ENCODE measurements at regions of chr2 and their contacts with region 1.

Region 1: GRCh38 chr2:205077159-205077558 is 531.9 kb downstream of the PARD3B start:
- DNase-seq: peak in 4 of 14 experiments; percentile 12 to 70 (median 60)
- ATAC-seq: peak; percentile 79
- H3K4me3 ChIP-seq: peak overlapping the region; percentile 17
- H3K4me3 Mint-ChIP-seq: peak overlapping the region; percentile 79
- H3K27ac ChIP-seq: peak overlapping the region; percentile 57 to 61
- H3K27ac Mint-ChIP-seq: peak overlapping the region; percentile 94
- H3K4me1 ChIP-seq: peaks cover 12% of the 10 kb centered on the region
- H3K4me1 Mint-ChIP-seq: peaks cover 76% of the 10 kb centered on the region
- H3K27me3 ChIP-seq: no peaks in the 10 kb centered on the region
- H3K27me3 Mint-ChIP-seq: no peaks in the 10 kb centered on the region
- CTCF ChIP-seq: no peak

Region 2: DNA sequence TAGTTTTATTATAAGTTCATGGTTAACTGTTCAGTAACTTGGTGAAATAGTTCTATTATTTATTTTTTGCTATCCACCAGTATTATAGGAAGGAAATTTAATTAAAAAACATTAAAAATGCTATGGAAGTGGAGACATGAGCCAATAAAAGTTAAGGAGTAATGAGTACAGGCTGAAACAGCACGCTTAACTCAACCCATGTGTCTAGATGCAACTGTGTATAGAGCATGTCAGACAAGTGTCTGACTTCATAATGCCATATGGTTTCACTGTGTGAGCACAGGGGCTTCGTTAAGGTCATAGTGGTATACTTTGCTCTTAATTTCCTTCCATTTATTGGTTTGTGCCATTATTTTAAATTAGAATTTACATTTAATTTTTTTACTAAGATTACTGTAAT is 38.4 kb after region 1 on chr2:
- CTCF ChIA-PET with region 1: no interaction called
- POLR2A ChIA-PET with region 1: no interaction called
- intact Hi-C with region 1: loop called in 1 of 2 experiments (anchors 5 kb)
- DNase-seq: no peak
- ATAC-seq: no peak
- H3K4me3 ChIP-seq: no peak overlapping the region
- H3K4me3 Mint-ChIP-seq: no peak overlapping the region
- H3K27ac ChIP-seq: no peak overlapping the region
- H3K27ac Mint-ChIP-seq: no peak overlapping the region
- H3K4me1 ChIP-seq: no peaks in the 10 kb centered on the region
- H3K4me1 Mint-ChIP-seq: no peaks in the 10 kb centered on the region
- H3K27me3 ChIP-seq: no peaks in the 10 kb centered on the region
- H3K27me3 Mint-ChIP-seq: no peaks in the 10 kb centered on the region
- CTCF ChIP-seq: no peak